ENCODE measurements at regions of chr7 and their contacts with region 1.

Region 1: DNA sequence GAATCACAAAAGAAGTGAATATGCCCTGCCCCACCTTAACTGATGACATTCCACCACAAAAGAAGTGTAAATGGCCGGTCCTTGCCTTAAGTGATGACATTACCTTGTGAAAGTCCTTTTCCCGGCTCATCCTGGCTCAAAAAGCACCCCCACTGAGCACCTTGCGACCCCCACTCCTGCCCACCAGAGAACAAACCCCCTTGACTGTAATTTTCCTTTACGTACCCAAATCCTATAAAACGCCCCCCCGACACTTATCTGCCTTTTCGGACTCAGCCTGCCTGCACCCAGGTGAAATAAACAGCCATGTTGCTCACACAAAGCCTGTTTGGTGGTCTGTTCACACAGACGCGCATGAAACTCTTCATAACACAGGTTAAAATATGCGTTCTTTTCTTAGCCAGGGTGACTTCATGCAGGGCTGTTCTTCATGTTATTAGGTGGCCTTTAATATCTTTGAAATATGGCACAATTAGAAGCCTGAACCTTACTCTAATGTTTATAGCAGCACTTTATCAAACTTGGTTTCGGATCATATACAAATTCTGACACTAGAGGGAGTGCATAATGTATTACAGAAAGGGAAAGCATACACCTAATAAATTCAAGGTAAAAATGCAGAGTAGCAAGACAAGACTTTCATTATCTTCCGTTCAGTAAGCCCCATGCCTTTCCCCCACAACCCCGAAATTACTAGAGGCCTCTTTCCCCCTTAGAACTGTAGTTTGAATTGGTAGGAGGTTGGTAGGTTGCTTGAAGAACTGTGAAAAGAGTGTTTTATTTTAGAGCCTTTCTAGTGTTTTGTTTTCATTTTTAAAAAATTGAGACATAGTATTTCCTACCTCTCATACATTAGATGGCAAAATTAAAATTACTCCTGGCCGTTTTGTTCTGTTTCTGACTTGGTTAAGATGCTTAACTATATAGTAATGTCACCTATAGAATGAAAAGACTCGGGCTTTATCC is 117.9 kb downstream of the NPY start:
- DNase-seq: no peak
- ATAC-seq: no peak

Region 2: GRCh38 chr7:24660546-24660945 is 258.6 kb after region 1 on chr7:
- intact Hi-C with region 1: loop called (anchors 5 kb)
- DNase-seq: no peak
- ATAC-seq: no peak